MCF 10A (cell line): ENCODE measurements at regions of chr22 and their contacts with region 1.

Region 1: DNA sequence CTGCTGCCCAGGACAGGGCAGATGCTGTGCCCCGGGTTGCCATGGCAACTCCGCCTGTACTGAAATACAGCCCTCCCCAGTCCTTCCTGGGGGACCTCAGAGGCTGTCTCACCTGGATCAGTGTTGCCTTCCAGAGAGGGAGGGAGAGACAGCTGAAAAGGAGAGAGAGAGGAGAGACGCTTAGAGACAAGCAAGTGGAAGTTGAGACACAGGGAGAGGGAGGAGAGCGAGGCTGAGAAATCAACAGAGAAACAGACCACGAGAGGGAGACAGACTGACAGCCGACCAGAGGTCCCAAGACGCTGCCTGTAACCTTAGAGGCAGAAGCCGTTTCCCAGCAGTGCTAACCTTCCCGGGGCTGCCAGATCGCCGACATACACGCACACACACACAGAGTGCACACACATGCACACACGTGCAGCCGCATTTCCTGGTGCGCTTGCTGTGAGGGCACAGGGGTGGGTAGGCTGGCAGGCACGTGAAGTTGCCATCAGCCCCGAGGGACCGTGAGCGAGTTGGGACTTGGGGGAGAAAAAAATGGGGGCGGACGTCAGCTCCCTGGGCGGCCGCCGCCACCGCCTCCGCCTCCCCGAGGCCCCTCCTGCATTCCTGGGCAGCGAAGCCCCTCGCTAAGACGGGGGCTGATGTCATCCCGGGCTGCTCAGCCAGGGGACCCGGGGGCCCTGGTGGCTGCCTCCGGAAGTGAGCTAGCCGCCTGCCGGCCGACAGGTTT is 88.6 kb upstream of the CRYBB3 start:
- DNase-seq: peak; percentile 89
- H3K4me3 Mint-ChIP-seq: peak overlapping the region; percentile 74
- H3K27ac Mint-ChIP-seq: peak overlapping the region; percentile 97
- H3K4me1 Mint-ChIP-seq: peaks cover 32% of the 10 kb centered on the region
- H3K27me3 Mint-ChIP-seq: no peaks in the 10 kb centered on the region
- CTCF ChIP-seq: peak; percentile 42

Region 2: GRCh38 chr22:24994070-24994763 is 116.8 kb before region 1 on chr22:
- CTCF ChIA-PET with region 1: no interaction called
- POLR2A ChIA-PET with region 1: no interaction called
- intact Hi-C with region 1: no loop called
- DNase-seq: peak; percentile 91
- H3K4me3 Mint-ChIP-seq: peak overlapping the region; percentile 50
- H3K27ac Mint-ChIP-seq: peak overlapping the region; percentile 91
- H3K4me1 Mint-ChIP-seq: peaks cover 64% of the 10 kb centered on the region
- H3K27me3 Mint-ChIP-seq: no peaks in the 10 kb centered on the region
- CTCF ChIP-seq: peak; percentile 38

Region 3: GRCh38 chr22:25007444-25008106 is 103.4 kb before region 1 on chr22:
- CTCF ChIA-PET with region 1: no interaction called
- POLR2A ChIA-PET with region 1: no interaction called
- intact Hi-C with region 1: no loop called
- DNase-seq: no peak
- H3K4me3 Mint-ChIP-seq: no peak overlapping the region
- H3K27ac Mint-ChIP-seq: peak overlapping the region; percentile 86
- H3K4me1 Mint-ChIP-seq: peaks cover 11% of the 10 kb centered on the region
- H3K27me3 Mint-ChIP-seq: no peaks in the 10 kb centered on the region
- CTCF ChIP-seq: no peak

Region 4: DNA sequence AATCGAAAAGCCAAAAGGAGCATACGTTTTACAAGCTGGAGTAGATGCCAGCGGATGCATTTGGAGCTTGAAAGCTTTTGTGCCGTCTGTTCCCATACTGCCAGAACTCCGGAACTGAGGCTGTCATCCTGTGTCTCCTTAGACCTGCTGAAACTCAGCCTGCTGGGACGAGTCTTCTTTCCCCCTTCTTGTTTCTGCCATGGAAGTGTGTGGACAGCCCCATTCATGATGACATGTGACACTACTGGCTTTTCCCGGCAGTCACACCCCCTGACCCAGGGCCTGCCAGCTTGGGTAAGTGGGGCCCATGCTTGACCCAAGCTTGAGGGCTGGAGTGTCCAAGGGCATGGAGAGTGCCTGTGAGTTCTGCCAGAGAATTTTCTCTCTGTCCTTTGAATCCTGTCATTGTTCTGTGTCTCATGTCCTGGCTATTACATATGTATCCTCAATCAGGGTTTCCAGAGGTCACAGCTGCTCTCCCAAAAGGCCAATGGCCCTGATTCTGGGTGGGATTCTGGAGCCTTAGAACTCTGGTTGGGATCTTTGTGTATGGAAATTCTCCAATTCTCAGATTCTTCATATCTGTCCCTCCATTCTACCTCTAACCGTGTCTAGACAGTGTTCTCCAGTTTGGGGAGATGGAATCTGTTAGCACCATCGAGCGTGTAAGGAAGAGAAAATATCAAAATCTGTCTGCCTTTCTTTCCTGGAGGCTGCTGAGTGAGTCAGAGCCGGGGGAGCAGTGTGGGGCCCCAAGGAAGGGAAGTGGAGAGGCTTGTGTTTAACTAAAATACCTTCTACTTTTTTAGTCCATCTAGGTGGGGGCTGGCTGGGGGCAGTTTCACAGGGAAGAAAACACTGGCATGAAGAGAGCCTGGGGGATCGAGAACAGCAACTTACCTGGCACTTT is 85.3 kb before region 1 on chr22:
- CTCF ChIA-PET with region 1: no interaction called
- POLR2A ChIA-PET with region 1: no interaction called
- intact Hi-C with region 1: no loop called
- DNase-seq: peak; percentile 54
- H3K4me3 Mint-ChIP-seq: peak overlapping the region; percentile 13
- H3K27ac Mint-ChIP-seq: peak overlapping the region; percentile 79
- H3K4me1 Mint-ChIP-seq: peaks cover 28% of the 10 kb centered on the region
- H3K27me3 Mint-ChIP-seq: no peaks in the 10 kb centered on the region
- CTCF ChIP-seq: no peak

Region 5: GRCh38 chr22:25125693-25126357 is 14.8 kb after region 1 on chr22:
- CTCF ChIA-PET with region 1: interaction called, 16 read pairs
- POLR2A ChIA-PET with region 1: interaction called, 3 read pairs
- intact Hi-C with region 1: no loop called
- DNase-seq: no peak
- H3K4me3 Mint-ChIP-seq: no peak overlapping the region
- H3K27ac Mint-ChIP-seq: no peak overlapping the region
- H3K4me1 Mint-ChIP-seq: peaks cover under 1% of the 10 kb centered on the region
- H3K27me3 Mint-ChIP-seq: no peaks in the 10 kb centered on the region
- CTCF ChIP-seq: no peak

Region 6: DNA sequence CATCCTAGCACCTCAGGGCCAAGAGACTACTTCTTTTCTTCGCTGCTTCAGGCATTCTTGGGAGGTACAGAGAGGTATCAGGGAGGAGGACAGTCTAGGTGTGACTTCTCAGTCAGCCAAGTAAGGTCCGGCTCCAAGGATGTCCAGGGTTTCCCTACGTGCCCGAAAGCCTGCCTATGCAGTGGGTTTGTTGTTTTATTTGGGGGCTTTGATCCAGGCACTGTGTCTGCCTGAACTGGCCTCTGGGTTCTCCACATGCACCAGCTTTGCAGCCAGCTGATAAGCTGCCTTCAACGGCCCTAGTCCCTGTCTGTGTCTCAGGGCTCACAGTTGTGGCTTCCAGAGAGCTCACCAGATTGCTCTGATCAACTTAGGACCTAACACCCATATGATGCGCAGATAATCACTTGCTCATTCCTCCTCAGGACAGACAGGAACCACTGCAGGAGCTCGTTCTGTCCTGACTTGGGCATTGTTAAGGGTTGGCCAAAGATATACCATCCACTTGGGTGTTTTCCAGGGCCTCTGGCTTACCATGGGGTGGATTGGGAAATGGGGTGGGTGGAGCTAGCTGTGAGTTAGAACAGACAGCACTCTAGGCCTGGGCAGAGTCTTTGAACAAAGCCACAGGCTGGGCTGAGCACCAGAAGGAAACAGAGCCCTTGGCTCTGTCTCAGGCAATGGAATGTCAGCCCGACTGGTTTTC is 43.1 kb after region 1 on chr22:
- CTCF ChIA-PET with region 1: interaction called, 5 read pairs
- POLR2A ChIA-PET with region 1: interaction called, 5 read pairs
- intact Hi-C with region 1: loop called (anchors 5 kb)
- DNase-seq: peak; percentile 97
- H3K4me3 Mint-ChIP-seq: no peak overlapping the region
- H3K27ac Mint-ChIP-seq: peak overlapping the region; percentile 8
- H3K4me1 Mint-ChIP-seq: peaks cover 45% of the 10 kb centered on the region
- H3K27me3 Mint-ChIP-seq: no peaks in the 10 kb centered on the region
- CTCF ChIP-seq: no peak

Region 7: DNA sequence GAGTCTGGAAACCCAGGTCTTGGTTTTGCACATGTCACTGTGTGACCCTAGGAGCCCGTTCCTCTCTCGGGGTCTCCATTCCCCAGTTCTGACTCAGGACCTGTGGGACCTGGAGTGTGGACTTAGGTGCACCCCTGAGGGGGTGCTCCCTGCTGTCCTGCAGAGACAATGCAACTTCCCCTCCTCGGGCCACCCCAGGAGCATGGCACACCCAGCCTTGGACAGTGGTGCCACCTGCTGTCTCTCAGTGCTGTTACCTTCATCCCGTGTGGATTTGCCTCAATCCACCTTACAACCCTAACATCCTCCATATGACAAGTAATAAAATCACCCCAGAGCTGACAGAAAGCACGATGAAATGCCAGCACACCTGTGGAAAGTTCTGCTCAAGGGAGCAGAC is 61.1 kb after region 1 on chr22:
- CTCF ChIA-PET with region 1: interaction called, 20 read pairs
- POLR2A ChIA-PET with region 1: interaction called, 5 read pairs
- intact Hi-C with region 1: loop called (anchors 5 kb)
- DNase-seq: peak; percentile 39
- H3K4me3 Mint-ChIP-seq: no peak overlapping the region
- H3K27ac Mint-ChIP-seq: peak overlapping the region; percentile 61
- H3K4me1 Mint-ChIP-seq: peaks cover 31% of the 10 kb centered on the region
- H3K27me3 Mint-ChIP-seq: no peaks in the 10 kb centered on the region
- CTCF ChIP-seq: no peak

Region 8: GRCh38 chr22:25202290-25202921 is 91.4 kb after region 1 on chr22:
- CTCF ChIA-PET with region 1: interaction called, 10 read pairs
- POLR2A ChIA-PET with region 1: no interaction called
- intact Hi-C with region 1: no loop called
- DNase-seq: peak; percentile 69
- H3K4me3 Mint-ChIP-seq: no peak overlapping the region
- H3K27ac Mint-ChIP-seq: no peak overlapping the region
- H3K4me1 Mint-ChIP-seq: no peaks in the 10 kb centered on the region
- H3K27me3 Mint-ChIP-seq: no peaks in the 10 kb centered on the region
- CTCF ChIP-seq: peak; percentile 72

Region 9: GRCh38 chr22:25282671-25283561 is 171.9 kb after region 1 on chr22:
- CTCF ChIA-PET with region 1: no interaction called
- POLR2A ChIA-PET with region 1: no interaction called
- intact Hi-C with region 1: no loop called
- DNase-seq: no peak
- H3K4me3 Mint-ChIP-seq: no peak overlapping the region
- H3K27ac Mint-ChIP-seq: no peak overlapping the region
- H3K4me1 Mint-ChIP-seq: no peaks in the 10 kb centered on the region
- H3K27me3 Mint-ChIP-seq: peaks cover 58% of the 10 kb centered on the region
- CTCF ChIP-seq: no peak